Activated B cell treated with CpG ODN at 0.5 μM for 24 hours (primary cell): ENCODE measurements at regions of chr2 and their contacts with region 1.

Region 1: GRCh38 chr2:85288244-85288725 is 39.5 kb downstream of the TGOLN2 start:
- DNase-seq: no peak
- ATAC-seq: no peak
- H3K4me3 Mint-ChIP-seq: no peak overlapping the region
- H3K27ac Mint-ChIP-seq: no peak overlapping the region
- H3K4me1 Mint-ChIP-seq: peaks cover 12% of the 10 kb centered on the region
- H3K27me3 Mint-ChIP-seq: peaks cover 2% of the 10 kb centered on the region
- CTCF ChIP-seq: no peak

Region 2: GRCh38 chr2:84022810-84023431 is 1265.4 kb before region 1 on chr2:
- CTCF ChIA-PET with region 1: no interaction called
- POLR2A ChIA-PET with region 1: no interaction called
- intact Hi-C with region 1: loop called (anchors 5 kb)
- DNase-seq: no peak
- ATAC-seq: no peak
- H3K4me3 Mint-ChIP-seq: no peak overlapping the region
- H3K27ac Mint-ChIP-seq: no peak overlapping the region
- H3K4me1 Mint-ChIP-seq: no peaks in the 10 kb centered on the region
- H3K27me3 Mint-ChIP-seq: no peaks in the 10 kb centered on the region
- CTCF ChIP-seq: peak; percentile 50

Region 3: DNA sequence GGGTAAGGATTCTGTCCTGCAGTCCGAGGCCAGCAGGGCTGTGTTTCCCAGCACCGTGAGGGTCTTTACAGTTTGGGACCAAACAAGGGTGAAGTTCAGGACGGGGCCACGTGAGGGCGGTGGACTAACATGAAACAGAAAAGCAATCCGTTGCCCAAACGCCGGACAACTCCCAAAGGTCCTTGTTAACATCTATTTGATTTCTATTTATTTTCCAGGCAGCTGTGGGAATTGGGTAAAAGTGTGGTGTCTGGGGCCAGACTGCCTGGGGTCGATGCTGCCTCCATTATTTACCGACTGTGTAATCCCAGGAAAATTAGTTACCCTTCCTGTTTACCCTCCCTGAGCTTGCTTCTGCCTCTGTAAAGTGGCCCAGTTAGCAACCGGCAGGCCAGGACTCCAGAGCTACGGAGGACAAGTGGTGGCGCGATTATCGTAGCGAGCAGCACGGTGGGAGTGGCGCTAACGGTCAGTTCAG is 221.4 kb before region 1 on chr2:
- CTCF ChIA-PET with region 1: interaction called, 3 read pairs
- POLR2A ChIA-PET with region 1: no interaction called
- intact Hi-C with region 1: loop called (anchors 2 kb)
- DNase-seq: no peak
- ATAC-seq: peak; percentile 31
- H3K4me3 Mint-ChIP-seq: no peak overlapping the region
- H3K27ac Mint-ChIP-seq: no peak overlapping the region
- H3K4me1 Mint-ChIP-seq: peaks cover 9% of the 10 kb centered on the region
- H3K27me3 Mint-ChIP-seq: peaks cover 19% of the 10 kb centered on the region
- CTCF ChIP-seq: no peak

Region 4: GRCh38 chr2:85132834-85133637 is 155.2 kb before region 1 on chr2 and contains the start of gene TCF7L1:
- CTCF ChIA-PET with region 1: no interaction called
- POLR2A ChIA-PET with region 1: no interaction called
- intact Hi-C with region 1: loop called (anchors 5 kb)
- DNase-seq: peak; percentile 24
- ATAC-seq: peak; percentile 70
- H3K4me3 Mint-ChIP-seq: peak within 1 kb of the TSS; percentile 79
- H3K27ac Mint-ChIP-seq: no peak within 1 kb of the TSS
- H3K4me1 Mint-ChIP-seq: peaks cover 14% of the 10 kb centered on the region
- H3K27me3 Mint-ChIP-seq: peaks cover 41% of the 10 kb centered on the region
- CTCF ChIP-seq: no peak
- total RNA-seq, gene TCF7L1: 0.07 TPM in 2 replicates

Region 5: DNA sequence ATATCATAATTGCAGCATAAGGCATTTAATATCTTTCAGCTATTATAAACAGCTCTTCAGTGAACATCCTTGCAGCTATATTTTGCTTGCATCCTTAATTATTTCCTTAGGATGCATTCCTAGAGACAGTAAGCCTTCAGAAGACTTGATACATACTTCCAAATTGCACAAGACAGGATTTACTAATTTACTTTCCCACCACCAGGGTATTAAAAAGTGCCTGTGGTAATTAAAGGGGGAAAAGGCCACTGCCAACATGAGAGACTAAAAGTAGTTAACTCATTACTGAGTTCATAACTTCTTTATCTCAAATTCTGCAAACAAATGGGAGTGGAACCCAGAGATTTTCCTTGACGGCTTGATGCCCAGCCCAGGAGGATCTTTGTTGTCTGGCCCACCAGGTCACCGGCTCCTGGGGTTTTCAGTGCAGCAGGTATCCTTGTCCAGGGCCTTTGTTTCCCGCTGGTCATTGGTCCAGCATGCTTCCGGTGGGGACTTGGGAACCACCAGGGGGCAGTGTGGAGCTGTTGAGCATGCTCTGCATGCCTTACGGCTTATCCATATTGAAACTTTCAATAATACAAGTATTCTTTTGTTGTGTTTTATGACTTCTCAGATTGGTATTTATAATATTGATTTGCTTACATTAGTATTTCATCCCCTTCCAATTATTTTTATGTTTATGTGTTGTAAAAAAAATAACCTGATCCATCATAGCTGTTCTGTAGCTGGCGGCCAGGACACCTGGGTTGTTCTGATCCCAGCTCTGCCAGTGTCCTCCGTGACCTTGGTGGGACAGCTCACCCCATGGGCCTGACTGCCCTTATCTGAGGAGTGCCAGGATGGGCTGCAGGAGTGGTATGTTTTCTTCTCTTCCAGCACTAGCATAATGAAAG is 21.9 kb before region 1 on chr2:
- CTCF ChIA-PET with region 1: interaction called, 7 read pairs
- POLR2A ChIA-PET with region 1: no interaction called
- intact Hi-C with region 1: loop called (anchors 1 kb)
- DNase-seq: peak; percentile 44
- ATAC-seq: peak; percentile 25
- H3K4me3 Mint-ChIP-seq: no peak overlapping the region
- H3K27ac Mint-ChIP-seq: no peak overlapping the region
- H3K4me1 Mint-ChIP-seq: no peaks in the 10 kb centered on the region
- H3K27me3 Mint-ChIP-seq: peaks cover 16% of the 10 kb centered on the region
- CTCF ChIP-seq: peak; percentile 53

Region 6: DNA sequence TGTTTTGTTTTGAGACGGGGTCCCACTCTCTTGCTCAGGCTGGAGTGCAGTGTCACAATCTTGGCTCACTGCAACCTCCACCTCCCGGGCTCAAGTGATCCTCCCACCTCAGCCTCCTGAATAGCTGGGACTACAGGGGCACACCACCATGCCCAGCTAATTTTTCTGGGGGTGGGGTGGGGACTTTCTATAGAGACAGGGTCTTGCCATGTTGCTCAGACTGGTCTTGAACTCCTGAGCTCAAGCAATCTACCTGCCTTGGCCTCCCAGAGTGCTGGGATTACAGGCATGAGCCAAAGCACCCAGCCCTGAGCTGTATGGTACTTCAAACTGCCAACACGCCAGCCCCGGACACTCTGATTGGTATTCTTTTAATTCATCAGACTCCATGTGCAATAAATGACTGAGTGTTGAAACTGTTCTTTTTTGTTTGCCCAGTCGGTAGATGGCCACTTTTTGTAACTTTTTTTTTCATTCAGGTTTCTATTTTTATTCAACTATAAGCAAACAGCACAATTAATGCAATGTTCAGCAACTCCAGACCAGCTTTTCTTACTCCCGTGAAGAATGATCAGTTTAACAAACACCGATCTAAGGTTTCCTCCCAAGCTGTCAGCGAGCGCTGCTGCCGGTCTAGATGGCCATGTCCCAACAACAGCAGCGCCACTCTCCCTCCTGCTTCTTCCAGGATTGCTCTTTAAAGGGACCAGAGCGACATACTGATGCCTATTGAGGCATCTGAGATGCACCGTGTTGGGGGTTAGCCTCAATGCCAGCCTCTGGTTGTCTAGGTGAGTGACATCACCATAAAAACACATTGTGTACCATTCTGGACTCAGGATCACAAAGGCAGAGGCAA is 52.0 kb after region 1 on chr2:
- CTCF ChIA-PET with region 1: no interaction called
- POLR2A ChIA-PET with region 1: no interaction called
- intact Hi-C with region 1: no loop called
- DNase-seq: no peak
- ATAC-seq: no peak
- H3K4me3 Mint-ChIP-seq: no peak overlapping the region
- H3K27ac Mint-ChIP-seq: no peak overlapping the region
- H3K4me1 Mint-ChIP-seq: no peaks in the 10 kb centered on the region
- H3K27me3 Mint-ChIP-seq: no peaks in the 10 kb centered on the region
- CTCF ChIP-seq: no peak

Region 7: DNA sequence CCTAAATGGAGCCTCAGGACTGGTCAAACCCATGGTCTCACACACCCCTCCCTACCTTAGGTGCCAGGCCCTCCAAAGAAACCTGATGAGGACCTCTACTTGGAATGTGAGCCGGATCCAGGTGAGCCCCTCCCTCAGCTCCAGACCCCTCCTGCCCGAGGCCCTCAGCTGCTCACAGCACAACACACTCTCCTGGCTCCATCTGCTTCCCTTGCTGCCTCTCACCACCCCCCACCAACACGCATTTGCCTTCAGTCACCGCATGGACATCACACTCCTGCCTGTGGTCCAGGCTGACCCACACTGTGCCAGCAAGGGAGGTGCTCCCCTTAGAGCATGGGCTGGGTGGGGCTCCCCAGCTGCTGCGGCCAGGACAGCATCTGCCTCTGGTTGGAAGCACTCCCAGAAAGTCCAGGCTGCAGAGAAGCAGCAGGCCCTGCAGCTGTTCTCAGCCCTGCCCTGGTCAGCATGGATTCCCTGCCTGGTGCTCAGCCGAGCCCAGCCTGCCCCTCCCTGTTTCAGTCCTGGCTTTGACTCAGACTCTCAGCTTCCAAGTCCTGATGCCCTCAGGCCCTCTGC is 145.3 kb after region 1 on chr2:
- CTCF ChIA-PET with region 1: no interaction called
- POLR2A ChIA-PET with region 1: no interaction called
- intact Hi-C with region 1: no loop called
- DNase-seq: no peak
- ATAC-seq: no peak
- H3K4me3 Mint-ChIP-seq: no peak overlapping the region
- H3K27ac Mint-ChIP-seq: no peak overlapping the region
- H3K4me1 Mint-ChIP-seq: peaks cover 29% of the 10 kb centered on the region
- H3K27me3 Mint-ChIP-seq: no peaks in the 10 kb centered on the region
- CTCF ChIP-seq: no peak